ENCODE measurements at regions of chr3 and their contacts with region 1.

Region 1: DNA sequence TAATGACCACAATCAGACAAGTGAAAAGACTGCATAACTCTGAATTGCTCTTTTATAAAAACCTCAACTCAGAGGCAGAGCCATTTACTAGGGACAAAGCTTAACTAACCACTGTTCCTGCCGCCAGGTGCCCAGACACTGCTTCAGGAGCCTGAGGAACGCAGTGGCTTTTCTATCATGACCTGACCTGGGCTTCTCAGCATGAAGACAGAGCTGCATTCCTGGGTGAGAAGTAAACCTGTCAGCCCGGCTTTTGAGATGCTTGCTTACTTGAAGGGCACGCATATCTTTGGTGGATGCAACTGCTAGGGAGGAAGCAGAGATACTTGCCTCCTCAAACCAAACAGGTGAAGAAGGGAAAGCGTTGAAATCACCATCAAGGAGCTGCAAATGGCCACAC is 7.9 kb downstream of the LRRC31 start:
- DNase-seq: peak; percentile 18
- ATAC-seq: peak; percentile 84
- H3K4me3 Mint-ChIP-seq: no peak overlapping the region
- H3K27ac Mint-ChIP-seq: peak overlapping the region; percentile 32
- H3K4me1 Mint-ChIP-seq: peaks cover 9% of the 10 kb centered on the region
- H3K27me3 Mint-ChIP-seq: no peaks in the 10 kb centered on the region
- CTCF ChIP-seq: no peak

Region 2: GRCh38 chr3:169604568-169604967 is 257.3 kb before region 1 on chr3:
- CTCF ChIA-PET with region 1: no interaction called
- POLR2A ChIA-PET with region 1: no interaction called
- DNase-seq: no peak
- ATAC-seq: peak; percentile 86
- H3K4me3 Mint-ChIP-seq: peak overlapping the region; percentile 48
- H3K27ac Mint-ChIP-seq: no peak overlapping the region
- H3K4me1 Mint-ChIP-seq: peaks cover 17% of the 10 kb centered on the region
- H3K27me3 Mint-ChIP-seq: no peaks in the 10 kb centered on the region
- CTCF ChIP-seq: no peak

Region 3: GRCh38 chr3:169966428-169966950 is 104.6 kb after region 1 on chr3 and contains the start of gene SEC62:
- CTCF ChIA-PET with region 1: interaction called, 12 read pairs
- POLR2A ChIA-PET with region 1: no interaction called
- DNase-seq: peak; percentile 97
- ATAC-seq: peak; percentile 92
- H3K4me3 Mint-ChIP-seq: peak within 1 kb of the TSS; percentile 82
- H3K27ac Mint-ChIP-seq: peak within 1 kb of the TSS; percentile 96
- H3K4me1 Mint-ChIP-seq: peaks cover 33% of the 10 kb centered on the region
- H3K27me3 Mint-ChIP-seq: peaks cover 4% of the 10 kb centered on the region; the same call in 1 of the 2 replicates
- CTCF ChIP-seq: no peak
- total RNA-seq, gene SEC62: 51.2 to 61.0 TPM (median 52.5 TPM) in 3 replicates

Region 4: GRCh38 chr3:170033489-170033888 is 171.6 kb after region 1 on chr3:
- CTCF ChIA-PET with region 1: no interaction called
- POLR2A ChIA-PET with region 1: no interaction called
- DNase-seq: no peak
- ATAC-seq: no peak
- H3K4me3 Mint-ChIP-seq: no peak overlapping the region
- H3K27ac Mint-ChIP-seq: no peak overlapping the region
- H3K4me1 Mint-ChIP-seq: peaks cover 6% of the 10 kb centered on the region; the same call in 1 of the 2 replicates
- H3K27me3 Mint-ChIP-seq: no peaks in the 10 kb centered on the region
- CTCF ChIP-seq: no peak

Measured in WTC11 (cell line).